ENCODE measurements at regions of chrX and their contacts with region 1.

Region 1: GRCh38 chrX:41116948-41117347 is 31.7 kb downstream of the USP9X start:
- DNase-seq: peak in 1 of 2 donors; percentile 18
- H3K4me3 ChIP-seq: no peak overlapping the region
- H3K27ac ChIP-seq: peak overlapping the region in 1 of 5 donors; percentile 14
- H3K4me1 ChIP-seq: peaks cover 0 to 93% (median 42%) of the 10 kb centered on the region in 4 donors
- H3K27me3 ChIP-seq: no peaks in the 10 kb centered on the region
- CTCF ChIP-seq: no peak
- EP300 ChIP-seq: no peak
- POLR2A ChIP-seq: no peak

Region 2: GRCh38 chrX:40496728-40497127 is 620.2 kb before region 1 on chrX:
- intact Hi-C with region 1: no loop called
- DNase-seq: peak in 1 of 2 donors; percentile 70
- H3K4me3 ChIP-seq: no peak overlapping the region
- H3K27ac ChIP-seq: no peak overlapping the region
- H3K4me1 ChIP-seq: no peaks in the 10 kb centered on the region
- H3K27me3 ChIP-seq: peaks cover 0 to 4% (median 0%) of the 10 kb centered on the region in 3 donors
- CTCF ChIP-seq: no peak
- EP300 ChIP-seq: no peak
- POLR2A ChIP-seq: no peak

Region 3: GRCh38 chrX:40877887-40878286 is 239.1 kb before region 1 on chrX:
- intact Hi-C with region 1: loop called (anchors 10 kb)
- DNase-seq: peak in 1 of 2 donors; percentile 55
- H3K4me3 ChIP-seq: no peak overlapping the region
- H3K27ac ChIP-seq: no peak overlapping the region
- H3K4me1 ChIP-seq: no peaks in the 10 kb centered on the region
- H3K27me3 ChIP-seq: peaks cover 0 to 6% (median 0%) of the 10 kb centered on the region in 3 donors
- CTCF ChIP-seq: peak in 3 of 7 experiments; percentile 19 to 34 (median 31)
- EP300 ChIP-seq: no peak
- POLR2A ChIP-seq: no peak

Region 4: GRCh38 chrX:41055740-41056139 is 61.2 kb before region 1 on chrX:
- intact Hi-C with region 1: no loop called
- DNase-seq: no peak
- H3K4me3 ChIP-seq: no peak overlapping the region
- H3K27ac ChIP-seq: no peak overlapping the region
- H3K4me1 ChIP-seq: no peaks in the 10 kb centered on the region
- H3K27me3 ChIP-seq: peaks cover 0 to 4% (median 0%) of the 10 kb centered on the region in 3 donors
- CTCF ChIP-seq: no peak
- EP300 ChIP-seq: no peak
- POLR2A ChIP-seq: no peak